GM12878 (cell line): ENCODE measurements at regions of chr1 and their contacts with region 1.

Region 1: DNA sequence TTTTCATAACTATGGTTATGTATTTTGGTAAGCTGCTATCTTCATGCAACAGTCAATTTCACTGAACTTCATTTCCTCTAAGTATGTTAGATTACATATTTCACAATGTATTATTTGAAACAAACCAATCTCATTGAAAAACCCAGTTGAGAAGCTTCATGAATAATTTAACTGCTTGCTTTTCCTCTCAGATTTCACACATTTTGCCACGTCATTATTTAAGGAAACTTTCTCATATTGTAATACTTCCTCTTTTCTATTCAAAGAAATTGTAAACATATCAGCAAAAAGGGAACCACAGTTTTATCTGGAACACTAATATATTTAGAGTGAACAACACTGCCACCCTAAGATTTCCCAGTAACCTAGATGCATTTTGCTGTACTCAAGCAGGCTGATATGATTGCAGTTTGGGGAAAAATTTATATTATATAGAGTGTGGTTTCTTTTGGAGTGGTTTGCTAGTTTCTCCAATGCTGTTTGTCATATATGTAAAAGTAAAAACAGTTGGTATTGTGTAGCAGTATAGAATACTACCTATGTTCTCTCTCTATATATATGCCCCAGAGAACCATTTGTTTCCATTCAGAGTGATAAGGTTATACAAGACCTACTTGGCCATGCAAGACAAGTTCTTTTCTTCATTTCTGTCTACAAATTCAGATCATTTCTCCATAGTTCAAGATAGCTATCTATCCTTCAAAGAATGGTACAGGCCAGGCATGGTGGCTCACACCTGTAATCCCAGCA is 28.4 kb upstream of the AHCTF1 start:
- DNase-seq: peak; percentile 28
- ATAC-seq: peak; percentile 72
- H3K4me3 ChIP-seq: no peak overlapping the region
- H3K27ac ChIP-seq: no peak overlapping the region; the same call in 1 of the 2 replicates
- H3K4me1 ChIP-seq: peaks cover 10% of the 10 kb centered on the region
- H3K27me3 ChIP-seq: no peaks in the 10 kb centered on the region
- CTCF ChIP-seq: peak in 1 of 3 experiments; percentile 20; a peak in 1 of 6 replicates
- EP300 ChIP-seq: 0 out of 4 replicates have a peak, but pooled peaks of 1 of the 2 experiments have one; percentile 16
- POLR2A ChIP-seq: no peak
- RAD21 ChIP-seq: peak; percentile 43

Region 2: DNA sequence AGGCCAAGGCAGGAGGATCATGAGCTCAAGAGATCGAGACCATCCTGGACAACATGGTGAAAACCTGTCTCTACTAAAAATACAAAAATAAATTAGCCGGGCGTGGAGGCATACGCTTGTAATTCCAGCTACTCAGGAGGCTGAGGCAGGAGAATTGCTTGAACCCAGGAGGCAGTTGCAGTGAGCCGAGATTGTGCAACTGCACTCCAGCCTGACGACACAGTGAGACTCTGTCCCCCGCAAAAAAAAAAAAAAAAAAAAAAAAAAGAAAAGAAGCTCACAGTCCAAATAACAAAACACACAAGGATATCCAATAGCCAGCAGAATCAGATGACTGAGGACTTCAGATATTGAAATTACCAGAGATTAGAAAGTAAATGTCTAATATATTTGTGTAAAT is 40.2 kb before region 1 on chr1:
- CTCF ChIA-PET with region 1: no interaction called
- POLR2A ChIA-PET with region 1: no interaction called
- RAD21 ChIA-PET with region 1: no interaction called
- SMC1A ChIA-PET with region 1: no interaction called
- in situ Hi-C with region 1: no loop called
- intact Hi-C with region 1: no loop called
- DNase-seq: no peak
- ATAC-seq: no peak
- H3K4me3 ChIP-seq: no peak overlapping the region
- H3K27ac ChIP-seq: no peak overlapping the region
- H3K4me1 ChIP-seq: no peaks in the 10 kb centered on the region
- H3K27me3 ChIP-seq: no peaks in the 10 kb centered on the region
- CTCF ChIP-seq: no peak
- EP300 ChIP-seq: no peak
- POLR2A ChIP-seq: no peak
- RAD21 ChIP-seq: no peak

Region 3: DNA sequence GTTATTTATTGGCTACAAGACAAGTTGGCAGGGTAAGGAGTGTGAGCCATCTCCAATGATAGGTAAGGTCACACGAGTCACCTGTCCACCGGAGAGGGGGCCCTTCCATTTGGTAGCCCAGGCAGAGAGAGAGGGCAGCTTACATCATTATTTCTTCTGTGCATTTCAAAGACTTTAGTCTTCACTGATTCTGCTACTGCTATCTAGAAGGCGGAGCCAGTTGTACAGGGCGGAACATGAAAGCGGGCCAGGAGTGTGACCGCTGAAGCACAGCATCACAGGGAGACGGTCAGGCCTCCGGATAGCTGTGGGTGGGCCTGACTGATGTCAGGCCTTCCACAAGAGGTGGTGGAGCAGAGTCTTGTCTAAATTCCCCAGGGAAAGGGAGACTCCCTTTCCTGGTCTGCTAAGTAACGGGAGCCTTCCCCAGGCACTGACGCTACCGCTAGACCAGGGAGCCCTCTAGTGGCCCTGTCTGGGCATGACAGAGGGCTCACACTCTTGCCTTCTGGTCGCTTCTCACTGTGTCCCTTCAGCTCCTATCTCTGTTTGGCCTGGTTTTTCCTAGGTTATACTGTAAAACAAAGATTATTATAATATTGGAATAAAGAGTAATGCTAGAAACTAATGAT is 11.1 kb after region 1 on chr1:
- CTCF ChIA-PET with region 1: interaction called, 23 read pairs
- POLR2A ChIA-PET with region 1: no interaction called
- RAD21 ChIA-PET with region 1: interaction called, 20 read pairs
- SMC1A ChIA-PET with region 1: interaction called, 5 read pairs
- in situ Hi-C with region 1: no loop called
- intact Hi-C with region 1: no loop called
- DNase-seq: no peak
- ATAC-seq: peak; percentile 60; the same call in 2 of the 3 replicates
- H3K4me3 ChIP-seq: no peak overlapping the region
- H3K27ac ChIP-seq: no peak overlapping the region
- H3K4me1 ChIP-seq: no peaks in the 10 kb centered on the region
- H3K27me3 ChIP-seq: no peaks in the 10 kb centered on the region
- CTCF ChIP-seq: peak; percentile 62 to 91 (median 65)
- EP300 ChIP-seq: no peak
- POLR2A ChIP-seq: no peak
- RAD21 ChIP-seq: peak; percentile 92

Region 4: GRCh38 chr1:247037483-247038320 is 77.6 kb after region 1 on chr1:
- CTCF ChIA-PET with region 1: no interaction called
- POLR2A ChIA-PET with region 1: no interaction called
- RAD21 ChIA-PET with region 1: no interaction called
- SMC1A ChIA-PET with region 1: no interaction called
- in situ Hi-C with region 1: no loop called
- intact Hi-C with region 1: no loop called
- DNase-seq: no peak
- ATAC-seq: no peak
- H3K4me3 ChIP-seq: no peak overlapping the region
- H3K27ac ChIP-seq: no peak overlapping the region
- H3K4me1 ChIP-seq: no peaks in the 10 kb centered on the region
- H3K27me3 ChIP-seq: no peaks in the 10 kb centered on the region
- CTCF ChIP-seq: no peak
- EP300 ChIP-seq: no peak
- POLR2A ChIP-seq: no peak
- RAD21 ChIP-seq: no peak